CD8-positive, alpha-beta T cell (primary cell): ENCODE measurements at regions of chr1 and their contacts with region 1.

Region 1: DNA sequence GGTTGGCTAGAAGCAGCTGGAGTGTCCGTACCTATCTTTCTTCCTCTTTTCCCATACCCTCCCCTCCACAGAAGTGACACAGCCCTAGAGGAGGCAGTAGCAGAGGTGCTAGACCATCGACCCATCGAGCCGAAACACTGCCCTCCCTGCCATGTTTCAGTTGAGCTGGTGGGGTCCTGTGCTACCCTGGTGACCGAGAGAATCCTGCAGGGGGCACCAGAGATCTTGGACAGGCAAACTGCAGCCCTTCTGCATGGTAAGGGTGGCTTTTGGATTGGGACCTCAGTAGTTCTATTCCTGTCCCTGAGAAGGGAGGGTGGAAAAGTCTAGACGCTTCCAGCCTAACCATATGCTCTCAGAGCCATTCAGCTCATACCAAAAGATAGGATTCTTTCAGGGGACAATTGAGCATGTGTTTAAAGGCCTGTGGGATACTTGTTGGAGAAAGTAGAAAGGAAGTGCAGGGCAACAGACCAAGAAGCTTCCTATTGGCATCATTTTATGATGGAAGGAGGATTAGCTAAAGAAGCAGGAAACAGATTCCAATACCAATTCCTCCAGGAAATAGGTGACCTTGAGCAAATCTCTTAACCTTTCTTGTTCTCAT is 11.7 kb upstream of the BNIPL start:
- DNase-seq: peak; percentile 77 to 94 (median 89)
- ATAC-seq: peak; percentile 100
- H3K4me3 ChIP-seq: peak overlapping the region in 1 of 2 experiments; percentile 40
- H3K4me3 Mint-ChIP-seq: peak overlapping the region; percentile 58
- H3K27ac ChIP-seq: no peak overlapping the region
- H3K27ac Mint-ChIP-seq: no peak overlapping the region
- H3K4me1 ChIP-seq: peaks cover 7% of the 10 kb centered on the region
- H3K4me1 Mint-ChIP-seq: peaks cover 7% of the 10 kb centered on the region
- H3K27me3 ChIP-seq: no peaks in the 10 kb centered on the region
- H3K27me3 Mint-ChIP-seq: no peaks in the 10 kb centered on the region
- CTCF ChIP-seq: peak; percentile 77

Region 2: GRCh38 chr1:151036363-151036762 is 11.7 kb after region 1 on chr1 and contains the start of gene BNIPL:
- CTCF ChIA-PET with region 1: interaction called, 18 read pairs
- POLR2A ChIA-PET with region 1: no interaction called
- intact Hi-C with region 1: no loop called
- DNase-seq: no peak
- ATAC-seq: no peak
- H3K4me3 ChIP-seq: no peak within 1 kb of the TSS
- H3K4me3 Mint-ChIP-seq: no peak within 1 kb of the TSS
- H3K27ac ChIP-seq: no peak within 1 kb of the TSS
- H3K27ac Mint-ChIP-seq: peak within 1 kb of the TSS; percentile 66
- H3K4me1 ChIP-seq: no peaks in the 10 kb centered on the region
- H3K4me1 Mint-ChIP-seq: peaks cover 7% of the 10 kb centered on the region
- H3K27me3 ChIP-seq: no peaks in the 10 kb centered on the region
- H3K27me3 Mint-ChIP-seq: no peaks in the 10 kb centered on the region
- CTCF ChIP-seq: no peak
- total RNA-seq, gene BNIPL: 0.08 to 0.47 TPM

Region 3: GRCh38 chr1:151070474-151071276 is 46.0 kb after region 1 on chr1 and contains the start of gene GABPB2:
- CTCF ChIA-PET with region 1: interaction called, 25 read pairs
- POLR2A ChIA-PET with region 1: no interaction called
- intact Hi-C with region 1: loop called (anchors 1 kb)
- DNase-seq: peak; percentile 69 to 96 (median 86)
- ATAC-seq: peak; percentile 81
- H3K4me3 ChIP-seq: peak within 1 kb of the TSS; percentile 78 to 97
- H3K4me3 Mint-ChIP-seq: peak within 1 kb of the TSS; percentile 99
- H3K27ac ChIP-seq: peak within 1 kb of the TSS; percentile 89 to 90
- H3K27ac Mint-ChIP-seq: peak within 1 kb of the TSS; percentile 100
- H3K4me1 ChIP-seq: peaks cover 11% of the 10 kb centered on the region
- H3K4me1 Mint-ChIP-seq: peaks cover 29% of the 10 kb centered on the region
- H3K27me3 ChIP-seq: no peaks in the 10 kb centered on the region
- H3K27me3 Mint-ChIP-seq: no peaks in the 10 kb centered on the region
- CTCF ChIP-seq: peak; percentile 91
- total RNA-seq, gene GABPB2: 20.0 to 21.9 TPM

Region 4: DNA sequence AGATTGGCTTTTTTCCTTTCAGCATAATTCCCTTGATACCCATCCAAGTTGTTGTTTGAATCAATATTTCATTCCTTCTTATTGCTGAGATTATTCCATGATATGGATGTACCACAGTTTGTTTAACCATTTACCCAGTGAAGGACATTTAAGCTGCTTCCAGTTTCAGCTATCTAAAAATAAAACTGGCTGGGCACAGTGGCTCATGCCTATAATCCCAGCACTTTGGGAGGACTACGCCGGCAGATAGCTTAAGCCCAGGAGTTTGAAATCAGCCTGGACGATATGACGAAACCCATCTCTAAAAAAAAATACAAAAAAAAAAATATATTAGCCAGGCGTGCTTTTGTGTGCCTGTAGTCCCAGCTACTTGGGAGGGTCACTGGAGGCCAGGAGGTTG is 89.2 kb after region 1 on chr1:
- CTCF ChIA-PET with region 1: interaction called, 11 read pairs
- POLR2A ChIA-PET with region 1: interaction called, 4 read pairs
- intact Hi-C with region 1: no loop called
- DNase-seq: peak in 1 of 9 experiments; percentile 1
- ATAC-seq: no peak
- H3K4me3 ChIP-seq: no peak overlapping the region
- H3K4me3 Mint-ChIP-seq: no peak overlapping the region
- H3K27ac ChIP-seq: no peak overlapping the region
- H3K27ac Mint-ChIP-seq: no peak overlapping the region
- H3K4me1 ChIP-seq: no peaks in the 10 kb centered on the region
- H3K4me1 Mint-ChIP-seq: no peaks in the 10 kb centered on the region
- H3K27me3 ChIP-seq: no peaks in the 10 kb centered on the region
- H3K27me3 Mint-ChIP-seq: no peaks in the 10 kb centered on the region
- CTCF ChIP-seq: no peak